ENCODE measurements at regions of chr6 and their contacts with region 1.

Region 1: DNA sequence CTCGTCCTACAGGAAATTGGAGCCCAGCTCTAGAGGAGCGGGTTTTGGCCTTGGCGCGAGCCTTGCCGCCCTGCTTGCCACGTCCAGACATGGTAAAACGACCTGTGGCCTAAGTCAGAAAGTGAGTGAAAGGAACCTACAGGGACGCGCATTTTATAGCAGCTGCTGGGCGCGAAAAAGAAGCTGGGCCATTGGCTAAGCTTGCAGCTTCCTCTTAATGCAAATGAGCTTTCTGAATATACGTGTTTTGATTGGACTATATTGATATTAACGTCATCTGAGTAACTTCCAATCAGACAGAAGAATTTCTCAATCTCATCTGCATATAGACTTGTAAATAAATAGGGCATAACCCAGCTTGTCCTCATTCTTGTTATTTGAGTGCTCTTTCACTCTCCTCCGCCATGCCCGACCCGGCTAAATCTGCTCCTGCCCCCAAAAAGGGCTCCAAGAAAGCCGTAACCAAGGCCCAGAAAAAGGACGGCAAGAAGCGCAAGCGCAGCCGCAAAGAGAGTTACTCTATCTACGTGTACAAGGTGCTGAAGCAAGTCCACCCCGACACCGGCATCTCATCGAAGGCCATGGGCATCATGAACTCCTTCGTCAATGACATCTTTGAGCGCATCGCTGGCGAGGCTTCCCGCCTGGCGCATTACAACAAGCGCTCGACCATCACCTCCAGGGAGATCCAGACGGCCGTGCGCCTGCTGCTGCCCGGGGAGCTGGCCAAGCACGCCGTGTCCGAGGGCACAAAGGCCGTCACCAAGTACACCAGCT is 18.9 kb downstream of the OR2B2 start:
- DNase-seq: peak; percentile 89
- ATAC-seq: peak; percentile 30

Region 2: GRCh38 chr6:27132532-27133280 is 760.5 kb before region 1 on chr6:
- intact Hi-C with region 1: loop called (anchors 2 kb)
- DNase-seq: peak; percentile 87
- ATAC-seq: peak; percentile 96

Region 3: GRCh38 chr6:27518881-27519795 is 374.1 kb before region 1 on chr6:
- intact Hi-C with region 1: loop called (anchors 1 kb)
- DNase-seq: peak; percentile 79
- ATAC-seq: peak; percentile 88

Region 4: GRCh38 chr6:27772261-27773001 is 120.8 kb before region 1 on chr6:
- intact Hi-C with region 1: loop called (anchors 1 kb)
- DNase-seq: peak; percentile 94
- ATAC-seq: peak; percentile 81

Region 5: DNA sequence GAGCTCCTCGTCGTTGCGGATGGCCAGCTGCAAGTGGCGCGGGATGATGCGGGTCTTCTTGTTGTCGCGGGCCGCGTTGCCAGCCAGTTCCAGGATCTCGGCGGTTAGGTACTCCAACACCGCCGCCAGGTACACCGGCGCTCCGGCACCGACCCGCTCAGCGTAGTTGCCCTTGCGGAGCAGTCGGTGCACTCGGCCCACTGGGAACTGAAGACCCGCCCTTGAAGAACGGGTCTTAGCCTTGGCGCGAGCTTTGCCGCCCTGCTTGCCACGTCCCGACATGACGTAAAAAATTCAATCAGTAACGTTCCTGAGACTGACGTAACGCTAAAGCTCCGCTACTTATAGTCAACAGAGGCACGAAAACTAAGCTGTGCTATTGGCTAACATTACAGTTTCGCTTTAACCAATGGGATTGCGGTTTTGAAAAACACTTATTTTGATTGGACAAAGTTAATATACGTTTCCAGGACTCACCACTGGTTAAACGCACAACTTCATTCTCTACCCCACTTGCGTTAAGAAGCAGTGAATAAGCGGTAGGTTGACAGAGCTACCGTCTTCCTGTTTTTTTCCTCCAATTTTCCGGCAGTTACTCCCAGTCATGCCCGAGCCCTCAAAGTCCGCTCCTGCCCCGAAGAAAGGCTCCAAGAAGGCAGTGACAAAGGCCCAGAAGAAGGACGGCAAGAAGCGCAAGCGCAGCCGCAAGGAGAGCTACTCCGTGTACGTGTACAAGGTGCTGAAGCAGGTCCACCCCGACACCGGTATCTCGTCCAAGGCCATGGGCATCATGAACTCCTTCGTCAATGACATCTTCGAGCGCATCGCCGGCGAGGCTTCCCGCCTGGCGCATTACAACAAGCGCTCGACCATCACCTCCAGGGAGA is 54.9 kb before region 1 on chr6:
- intact Hi-C with region 1: loop called (anchors 1 kb)
- DNase-seq: peak; percentile 87
- ATAC-seq: peak; percentile 92

Region 6: DNA sequence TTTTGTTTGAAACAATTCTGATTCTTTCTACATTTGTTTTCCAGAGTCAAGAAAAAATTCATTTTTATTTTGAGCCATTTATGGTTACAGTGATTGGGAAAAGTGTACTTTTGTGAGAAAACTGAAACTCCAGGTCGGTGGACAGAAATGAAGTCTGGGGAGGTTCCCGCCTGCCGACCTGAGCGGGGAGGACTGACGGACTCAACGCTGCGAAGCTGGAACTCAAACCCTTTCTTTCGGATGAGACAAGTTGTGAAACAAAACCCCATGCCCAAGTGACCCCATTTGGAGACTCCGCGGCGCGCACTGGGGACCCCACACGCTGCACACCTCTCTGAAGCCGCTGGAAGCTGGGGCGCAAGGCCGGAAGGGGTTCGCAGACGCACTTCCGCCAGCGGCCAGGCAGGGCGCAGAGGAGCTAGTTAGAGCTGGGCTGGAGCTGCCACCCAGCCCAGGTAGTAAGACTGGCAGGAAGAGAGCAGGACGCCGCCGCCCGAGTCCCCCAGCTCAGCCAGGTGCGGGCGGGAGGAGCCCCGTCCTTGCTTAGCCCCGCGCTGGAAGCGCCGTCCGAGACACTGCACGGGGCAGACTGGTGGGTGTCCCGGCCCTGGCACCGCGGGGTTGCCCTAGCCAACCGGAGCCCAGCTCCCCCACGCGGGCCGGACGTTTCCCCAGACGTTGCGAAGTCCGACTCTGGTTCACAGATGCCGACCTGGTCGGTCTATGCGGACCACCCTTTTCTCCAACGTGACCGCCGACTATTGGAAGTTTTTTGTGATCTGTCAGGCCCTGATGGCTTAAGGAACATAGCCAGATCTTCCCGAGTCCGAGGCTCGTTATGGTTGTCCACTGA is 211.4 kb after region 1 on chr6:
- intact Hi-C with region 1: no loop called
- DNase-seq: peak; percentile 90
- ATAC-seq: peak; percentile 98

Region 7: DNA sequence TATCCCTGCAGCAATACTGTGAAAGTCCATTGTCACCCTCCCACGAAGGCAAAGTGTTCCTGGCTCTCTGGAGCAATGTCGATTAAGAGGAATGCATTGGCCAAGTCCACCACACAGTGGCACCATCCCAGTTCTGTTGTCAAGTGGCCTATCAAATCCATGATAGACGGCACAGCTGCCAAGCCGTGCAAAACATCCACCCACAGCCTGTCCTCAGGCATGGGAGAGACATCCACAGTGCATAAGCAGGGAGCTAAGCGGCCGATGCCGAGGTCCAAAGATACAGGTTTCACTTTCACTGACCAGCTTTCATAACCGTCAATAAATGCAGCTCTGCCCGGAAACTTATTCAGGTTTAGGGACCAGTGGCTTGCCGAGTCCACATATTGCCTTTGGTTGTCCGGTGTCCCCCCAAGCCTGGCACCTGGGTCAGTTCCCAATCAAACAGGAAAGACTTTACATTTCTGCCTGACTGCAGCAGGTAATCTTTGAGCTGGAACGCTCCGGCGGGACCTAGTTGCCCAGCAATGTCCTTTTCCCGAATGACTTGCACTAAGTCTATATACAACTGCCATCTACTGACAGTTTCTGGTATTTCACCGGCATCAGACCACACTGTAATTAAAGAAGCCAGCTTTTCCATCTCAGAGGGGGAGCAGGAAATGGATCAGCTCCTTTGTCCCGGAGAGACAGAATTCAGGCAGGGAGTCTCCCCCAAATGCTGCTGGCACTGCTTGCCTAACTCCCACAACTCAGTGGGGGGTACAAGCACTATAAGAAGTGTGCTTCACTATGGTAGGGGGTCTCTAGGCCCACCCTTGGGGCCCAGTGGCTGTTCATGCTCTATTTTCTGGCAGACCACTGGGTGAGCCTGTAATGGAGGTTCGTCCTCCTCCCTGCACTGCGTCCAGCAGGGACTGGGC is 462.8 kb after region 1 on chr6:
- intact Hi-C with region 1: loop called (anchors 10 kb)
- DNase-seq: peak; percentile 84
- ATAC-seq: peak; percentile 88

Region 8: GRCh38 chr6:28710466-28711191 is 817.4 kb after region 1 on chr6:
- intact Hi-C with region 1: no loop called
- DNase-seq: no peak
- ATAC-seq: no peak

Measured in Right ventricle myocardium inferior (tissue), 1 donor.